ENCODE measurements at regions of chr9 and their contacts with region 1.

Region 1: GRCh38 chr9:93453047-93453914 is at the start of gene FAM120AOS:
- DNase-seq: peak; percentile 89 to 93 (median 89)
- H3K4me3 ChIP-seq: peak within 1 kb of the TSS; percentile 80 to 99 (median 95)
- H3K27ac ChIP-seq: peak within 1 kb of the TSS; percentile 68 to 86
- H3K4me1 ChIP-seq: peaks cover 18 to 35% (median 25%) of the 10 kb centered on the region in 4 experiments
- H3K27me3 ChIP-seq: no peaks in the 10 kb centered on the region

Region 2: GRCh38 chr9:93183609-93184431 is 269.5 kb before region 1 on chr9 and contains the start of gene WNK2:
- CTCF ChIA-PET with region 1: no interaction called
- POLR2A ChIA-PET with region 1: no interaction called
- DNase-seq: peak; percentile 10 to 53 (median 42)
- H3K4me3 ChIP-seq: peak within 1 kb of the TSS; percentile 15 to 69 (median 45)
- H3K27ac ChIP-seq: no peak within 1 kb of the TSS
- H3K4me1 ChIP-seq: peaks cover 2 to 18% (median 14%) of the 10 kb centered on the region in 4 experiments
- H3K27me3 ChIP-seq: peaks cover 0 to 85% (median 37%) of the 10 kb centered on the region in 5 experiments

Region 3: GRCh38 chr9:93357649-93358048 is 95.6 kb before region 1 on chr9:
- CTCF ChIA-PET with region 1: no interaction called
- POLR2A ChIA-PET with region 1: no interaction called
- DNase-seq: peak; percentile 42 to 88 (median 80)
- H3K4me3 ChIP-seq: no peak overlapping the region
- H3K27ac ChIP-seq: no peak overlapping the region
- H3K4me1 ChIP-seq: peaks cover 0 to 3% (median 0%) of the 10 kb centered on the region in 4 experiments
- H3K27me3 ChIP-seq: no peaks in the 10 kb centered on the region

Region 4: DNA sequence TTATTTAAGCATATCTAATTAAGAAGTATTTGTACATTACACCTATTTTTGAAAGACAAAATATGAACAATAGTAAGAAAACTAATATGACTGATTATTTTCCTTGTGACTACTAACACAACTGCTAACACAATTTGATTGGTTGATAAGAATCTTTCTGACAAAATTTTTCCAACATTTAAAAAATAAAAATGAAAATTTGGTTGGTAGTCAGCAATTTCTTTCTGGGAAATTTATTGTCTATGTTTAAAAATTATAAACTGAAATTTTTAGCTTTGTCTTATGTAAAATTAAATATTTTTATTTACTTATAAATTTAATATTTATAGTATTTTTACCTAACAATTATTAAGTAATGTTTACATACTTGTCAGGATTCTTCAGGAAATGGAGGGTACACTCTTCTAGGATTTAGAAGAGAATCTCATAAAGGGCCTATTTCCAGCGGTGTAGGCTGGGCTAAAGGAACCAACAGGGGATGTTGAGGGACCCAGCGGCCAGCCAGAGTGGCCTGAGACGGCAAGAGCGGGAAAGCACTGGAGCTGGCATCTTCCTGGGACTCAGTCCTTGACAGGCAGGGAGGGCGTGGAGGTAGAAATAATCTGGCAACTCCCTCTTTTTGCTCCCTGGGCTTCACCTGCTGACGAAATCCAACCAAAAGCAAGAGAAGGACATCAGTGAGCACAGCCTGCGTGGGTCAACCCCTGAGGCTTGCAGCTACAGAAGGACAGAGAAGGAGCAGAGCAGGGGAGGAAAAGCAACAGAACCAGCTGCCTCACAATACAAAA is 16.4 kb before region 1 on chr9:
- CTCF ChIA-PET with region 1: no interaction called
- POLR2A ChIA-PET with region 1: no interaction called
- DNase-seq: no peak
- H3K4me3 ChIP-seq: no peak overlapping the region
- H3K27ac ChIP-seq: no peak overlapping the region
- H3K4me1 ChIP-seq: peaks cover 0 to 2% (median under 1%) of the 10 kb centered on the region in 4 experiments
- H3K27me3 ChIP-seq: no peaks in the 10 kb centered on the region

Region 5: GRCh38 chr9:93464395-93464794 is 11.1 kb after region 1 on chr9:
- CTCF ChIA-PET with region 1: interaction called, 16 read pairs
- POLR2A ChIA-PET with region 1: interaction called, 4 read pairs
- DNase-seq: no peak
- H3K4me3 ChIP-seq: no peak overlapping the region
- H3K27ac ChIP-seq: peak overlapping the region in 1 of 2 experiments; percentile 63
- H3K4me1 ChIP-seq: peaks cover 11 to 60% (median 30%) of the 10 kb centered on the region in 4 experiments
- H3K27me3 ChIP-seq: no peaks in the 10 kb centered on the region